H1 (cell line): ENCODE measurements at regions of chr7 and their contacts with region 1.

Region 1: GRCh38 chr7:150378853-150379440 is at the start of gene ZNF775:
- DNase-seq: peak; percentile 89 to 93
- H3K4me3 ChIP-seq: peak within 1 kb of the TSS; percentile 88 to 96 (median 90)
- H3K27ac ChIP-seq: peak within 1 kb of the TSS; percentile 70
- H3K4me1 ChIP-seq: peaks cover 15 to 44% (median 27%) of the 10 kb centered on the region in 4 experiments
- H3K27me3 ChIP-seq: no peaks in the 10 kb centered on the region
- CTCF ChIP-seq: no peak
- EP300 ChIP-seq: no peak
- POLR2A ChIP-seq: peak in 1 of 2 experiments; percentile 79; a peak in 2 of 3 replicates
- RAD21 ChIP-seq: no peak; a peak in 1 of 4 replicates
- total RNA-seq, gene ZNF775: 21.5 and 24.9 TPM in 2 replicates

Region 2: DNA sequence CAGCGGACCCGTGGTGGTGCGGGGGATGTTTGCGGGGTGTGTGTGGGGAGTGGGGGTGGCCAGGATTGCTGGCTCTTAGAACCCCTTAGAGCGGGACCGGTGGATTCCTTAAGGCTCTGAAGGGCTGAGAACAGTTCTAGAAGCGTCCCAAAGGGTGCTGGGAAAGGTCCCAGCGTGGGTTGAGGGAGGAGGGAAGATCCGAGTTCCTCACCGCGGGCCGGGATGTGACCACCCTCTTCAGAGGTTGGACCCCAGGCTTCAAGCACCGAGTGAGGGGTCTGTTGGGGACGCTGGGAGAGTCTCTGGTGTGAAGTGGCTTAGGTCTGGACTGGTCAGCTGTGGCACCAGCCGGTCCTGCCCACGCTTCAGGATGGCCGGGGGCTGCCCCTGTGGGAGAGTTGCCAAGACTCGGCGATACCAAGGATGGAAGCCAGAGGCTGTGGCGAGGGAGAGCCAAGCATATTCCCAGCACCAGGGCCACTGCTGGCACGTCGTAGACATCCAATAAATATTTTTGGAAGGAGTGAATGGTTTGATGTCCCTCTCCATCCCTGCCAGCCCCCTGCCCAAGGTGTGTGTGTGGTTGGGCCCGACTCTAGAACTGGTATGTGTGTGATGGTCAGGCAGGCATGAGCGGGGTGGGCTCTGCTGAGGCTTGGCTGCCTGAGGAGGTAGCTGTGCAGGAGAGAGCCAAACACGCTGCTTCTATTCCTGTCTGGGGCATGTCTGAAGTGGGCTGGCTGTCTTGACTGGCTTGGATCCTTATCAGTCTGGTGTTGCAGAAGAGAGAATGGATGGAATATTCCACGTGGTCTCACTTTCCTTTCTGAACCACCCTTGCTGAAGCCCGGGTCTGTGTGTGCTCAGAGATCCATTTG is 19.4 kb after region 1 on chr7:
- CTCF ChIA-PET with region 1: interaction called, 31 read pairs
- POLR2A ChIA-PET with region 1: interaction called, 230 read pairs
- DNase-seq: no peak
- H3K4me3 ChIP-seq: no peak overlapping the region
- H3K27ac ChIP-seq: peak overlapping the region; percentile 90; the same call in 1 of the 2 replicates
- H3K4me1 ChIP-seq: peaks cover 20 to 47% (median 37%) of the 10 kb centered on the region in 4 experiments
- H3K27me3 ChIP-seq: no peaks in the 10 kb centered on the region
- CTCF ChIP-seq: no peak
- EP300 ChIP-seq: no peak
- POLR2A ChIP-seq: no peak
- RAD21 ChIP-seq: no peak

Region 3: GRCh38 chr7:150531704-150532103 is 152.8 kb after region 1 on chr7:
- CTCF ChIA-PET with region 1: no interaction called
- POLR2A ChIA-PET with region 1: no interaction called
- DNase-seq: no peak
- H3K4me3 ChIP-seq: no peak overlapping the region
- H3K27ac ChIP-seq: no peak overlapping the region
- H3K4me1 ChIP-seq: no peaks in the 10 kb centered on the region
- H3K27me3 ChIP-seq: no peaks in the 10 kb centered on the region
- CTCF ChIP-seq: no peak
- EP300 ChIP-seq: no peak
- POLR2A ChIP-seq: no peak
- RAD21 ChIP-seq: no peak